ENCODE measurements at regions of chr21 and their contacts with region 1.

Region 1: GRCh38 chr21:43318841-43319781 is 107.8 kb downstream of the SIK1 start:
- DNase-seq: peak; percentile 19 to 75
- ATAC-seq: peak in 7 of 8 donors; percentile 40 to 74 (median 58)
- H3K4me3 ChIP-seq: no peak overlapping the region
- H3K27ac ChIP-seq: peak overlapping the region in 7 of 10 donors; percentile 36 to 75 (median 46)
- H3K4me1 ChIP-seq: peaks cover 0 to 26% (median 9%) of the 10 kb centered on the region in 9 donors
- H3K27me3 ChIP-seq: peaks cover 0 to 9% (median 5%) of the 10 kb centered on the region in 7 donors
- CTCF ChIP-seq: no peak

Region 2: GRCh38 chr21:43308096-43308814 is 10.9 kb before region 1 on chr21:
- intact Hi-C with region 1: loop called in 1 of 10 experiments (anchors 2 kb)
- DNase-seq: no peak
- ATAC-seq: no peak
- H3K4me3 ChIP-seq: no peak overlapping the region
- H3K27ac ChIP-seq: no peak overlapping the region
- H3K4me1 ChIP-seq: peaks cover 0 to 15% (median 4%) of the 10 kb centered on the region in 9 donors
- H3K27me3 ChIP-seq: no peaks in the 10 kb centered on the region
- CTCF ChIP-seq: no peak

Region 3: GRCh38 chr21:43355923-43356285 is 36.8 kb after region 1 on chr21:
- intact Hi-C with region 1: loop called in 1 of 10 experiments (anchors 2 kb)
- DNase-seq: peak in 1 of 2 donors; percentile 6
- ATAC-seq: peak in 3 of 8 donors; percentile 11 to 35 (median 23)
- H3K4me3 ChIP-seq: no peak overlapping the region
- H3K27ac ChIP-seq: no peak overlapping the region
- H3K4me1 ChIP-seq: peaks cover 0 to 7% (median 4%) of the 10 kb centered on the region in 9 donors
- H3K27me3 ChIP-seq: no peaks in the 10 kb centered on the region
- CTCF ChIP-seq: no peak

Region 4: DNA sequence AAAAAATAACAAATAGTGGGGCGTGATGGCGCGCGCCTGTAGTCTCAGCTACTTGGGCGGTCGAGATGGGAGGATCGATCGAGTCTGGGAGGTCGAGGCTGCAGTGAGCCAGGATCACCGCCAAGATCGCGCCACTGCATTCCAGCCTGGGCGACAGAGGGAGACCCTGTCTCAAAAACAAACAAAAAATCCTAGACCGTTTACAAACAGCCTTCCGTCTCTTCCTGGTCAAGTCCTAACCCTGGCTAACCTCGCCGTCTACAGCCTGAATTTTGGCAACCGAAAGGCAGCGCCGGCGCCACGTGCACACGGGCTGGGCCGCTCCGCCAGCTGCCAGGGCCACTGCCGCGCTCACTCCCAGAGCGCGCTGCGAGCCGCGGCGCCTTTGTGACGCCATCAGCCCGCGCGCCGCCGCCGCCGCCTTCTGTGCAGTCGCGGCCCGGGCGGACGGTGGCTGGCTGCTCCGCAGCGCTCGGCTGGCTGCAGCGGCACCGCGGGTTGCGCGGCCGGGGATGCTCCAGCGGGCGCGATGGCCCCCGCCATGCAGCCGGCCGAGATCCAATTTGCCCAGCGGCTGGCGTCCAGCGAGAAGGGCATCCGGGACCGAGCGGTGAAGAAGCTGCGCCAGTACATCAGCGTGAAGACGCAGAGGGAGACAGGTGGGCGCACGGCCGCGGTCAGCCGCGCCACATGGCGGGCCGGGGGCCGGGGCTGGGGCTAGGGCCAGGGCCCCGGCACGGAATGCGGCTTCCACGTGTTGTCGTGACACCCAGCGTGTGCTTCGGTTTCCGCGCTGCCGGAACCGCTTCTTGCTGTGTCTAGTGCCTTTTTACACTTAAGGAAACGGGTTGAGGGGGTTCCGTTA is 340.3 kb after region 1 on chr21 and contains the starts of genes HSF2BP and RRP1B:
- intact Hi-C with region 1: loop called in 1 of 10 experiments (anchors 10 kb)
- DNase-seq: peak; percentile 76 to 85
- ATAC-seq: peak; percentile 92 to 97 (median 94)
- H3K4me3 ChIP-seq: peak within 1 kb of the TSS; percentile 89 to 100 (median 98)
- H3K27ac ChIP-seq: peak within 1 kb of the TSS; percentile 37 to 96 (median 91)
- H3K4me1 ChIP-seq: peaks cover 0 to 45% (median 29%) of the 10 kb centered on the region in 9 donors
- H3K27me3 ChIP-seq: no peaks in the 10 kb centered on the region
- CTCF ChIP-seq: peak in 1 of 9 donors; percentile 12
- total RNA-seq, gene HSF2BP: 0.12 to 0.51 (median 0.18) TPM in 5 of 10 donors, not detected in the others
- total RNA-seq, gene RRP1B: 7.1 to 11.3 (median 8.6) TPM

Measured in heart right ventricle (tissue), 16 donors.